ENCODE measurements at regions of chr12 and their contacts with region 1.

Region 1: GRCh38 chr12:95217377-95218149 is at the starts of genes FGD6 and VEZT:
- DNase-seq: peak; percentile 100
- H3K4me3 ChIP-seq: peak within 1 kb of the TSS; percentile 81 to 99 (median 94)
- H3K27ac ChIP-seq: peak within 1 kb of the TSS; percentile 88
- H3K4me1 ChIP-seq: peaks cover 37% of the 10 kb centered on the region
- H3K27me3 ChIP-seq: no peaks in the 10 kb centered on the region
- CTCF ChIP-seq: peak; percentile 61 to 70
- POLR2A ChIP-seq: peak; percentile 86
- total RNA-seq, gene FGD6: 14.0 and 17.8 TPM in 2 replicates
- total RNA-seq, gene VEZT: 85.2 and 91.3 TPM in 2 replicates

Region 2: GRCh38 chr12:94973221-94973620 is 244.3 kb before region 1 on chr12:
- CTCF ChIA-PET with region 1: no interaction called
- POLR2A ChIA-PET with region 1: no interaction called
- dilution Hi-C with region 1: no loop called
- intact Hi-C with region 1: no loop called
- DNase-seq: no peak
- H3K4me3 ChIP-seq: no peak overlapping the region
- H3K27ac ChIP-seq: no peak overlapping the region
- H3K4me1 ChIP-seq: no peaks in the 10 kb centered on the region
- H3K27me3 ChIP-seq: no peaks in the 10 kb centered on the region
- CTCF ChIP-seq: no peak
- POLR2A ChIP-seq: no peak

Region 3: GRCh38 chr12:95003213-95003920 is 214.2 kb before region 1 on chr12 and contains the start of gene NDUFA12:
- CTCF ChIA-PET with region 1: no interaction called
- POLR2A ChIA-PET with region 1: no interaction called
- dilution Hi-C with region 1: no loop called
- intact Hi-C with region 1: loop called (anchors 1 kb)
- DNase-seq: peak; percentile 97
- H3K4me3 ChIP-seq: peak within 1 kb of the TSS; percentile 66 to 89 (median 71)
- H3K27ac ChIP-seq: peak within 1 kb of the TSS; percentile 80
- H3K4me1 ChIP-seq: peaks cover 6% of the 10 kb centered on the region
- H3K27me3 ChIP-seq: no peaks in the 10 kb centered on the region
- CTCF ChIP-seq: no peak
- POLR2A ChIP-seq: peak; percentile 90
- total RNA-seq, gene NDUFA12: 126 and 140 TPM in 2 replicates

Region 4: DNA sequence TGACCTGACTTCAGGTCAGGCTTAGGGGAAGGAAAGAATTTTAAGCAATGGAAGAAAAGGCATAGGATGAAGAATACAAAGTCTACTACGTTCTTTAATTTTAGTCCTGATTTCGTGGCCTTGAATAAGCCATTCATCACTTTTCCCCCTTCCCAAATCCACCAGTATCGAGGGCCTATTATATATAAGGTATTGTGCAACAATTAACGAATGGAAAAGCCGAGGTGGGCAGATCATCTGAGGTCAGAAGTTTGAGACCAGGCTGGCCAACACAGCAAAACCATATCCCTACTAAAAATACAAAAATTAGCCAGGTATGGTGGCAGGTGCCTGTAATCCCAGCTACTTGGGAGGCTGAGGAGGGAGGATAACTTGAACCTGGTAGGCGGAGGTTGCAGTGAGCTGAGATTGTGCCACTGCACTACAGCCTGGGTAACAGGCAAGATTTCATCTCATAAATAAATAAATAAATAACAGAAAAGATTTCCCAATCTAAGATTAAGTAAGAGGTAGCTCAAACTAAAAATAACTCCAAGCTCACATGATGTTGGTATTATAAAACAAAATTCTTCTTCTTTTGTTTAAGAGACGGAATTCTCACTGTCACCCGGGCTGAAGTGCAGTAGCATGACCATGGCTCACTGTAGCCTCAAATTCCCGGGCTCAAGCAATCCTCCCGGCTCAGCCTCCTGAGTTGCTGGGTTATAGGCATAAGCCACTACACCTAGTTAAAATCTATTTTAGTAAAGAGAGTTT is 85.8 kb before region 1 on chr12:
- CTCF ChIA-PET with region 1: interaction called, 14 read pairs
- POLR2A ChIA-PET with region 1: interaction called, 7 read pairs
- dilution Hi-C with region 1: no loop called
- intact Hi-C with region 1: no loop called
- DNase-seq: no peak
- H3K4me3 ChIP-seq: no peak overlapping the region
- H3K27ac ChIP-seq: no peak overlapping the region
- H3K4me1 ChIP-seq: peaks cover 9% of the 10 kb centered on the region
- H3K27me3 ChIP-seq: no peaks in the 10 kb centered on the region
- CTCF ChIP-seq: no peak
- POLR2A ChIP-seq: no peak

Region 5: GRCh38 chr12:95204141-95204866 is 13.3 kb before region 1 on chr12:
- CTCF ChIA-PET with region 1: interaction called, 29 read pairs
- POLR2A ChIA-PET with region 1: interaction called, 3 read pairs
- dilution Hi-C with region 1: no loop called
- intact Hi-C with region 1: loop called (anchors 1 kb)
- DNase-seq: peak; percentile 85
- H3K4me3 ChIP-seq: no peak overlapping the region
- H3K27ac ChIP-seq: peak overlapping the region; percentile 81
- H3K4me1 ChIP-seq: peaks cover 56% of the 10 kb centered on the region
- H3K27me3 ChIP-seq: no peaks in the 10 kb centered on the region
- CTCF ChIP-seq: no peak
- POLR2A ChIP-seq: no peak

Region 6: DNA sequence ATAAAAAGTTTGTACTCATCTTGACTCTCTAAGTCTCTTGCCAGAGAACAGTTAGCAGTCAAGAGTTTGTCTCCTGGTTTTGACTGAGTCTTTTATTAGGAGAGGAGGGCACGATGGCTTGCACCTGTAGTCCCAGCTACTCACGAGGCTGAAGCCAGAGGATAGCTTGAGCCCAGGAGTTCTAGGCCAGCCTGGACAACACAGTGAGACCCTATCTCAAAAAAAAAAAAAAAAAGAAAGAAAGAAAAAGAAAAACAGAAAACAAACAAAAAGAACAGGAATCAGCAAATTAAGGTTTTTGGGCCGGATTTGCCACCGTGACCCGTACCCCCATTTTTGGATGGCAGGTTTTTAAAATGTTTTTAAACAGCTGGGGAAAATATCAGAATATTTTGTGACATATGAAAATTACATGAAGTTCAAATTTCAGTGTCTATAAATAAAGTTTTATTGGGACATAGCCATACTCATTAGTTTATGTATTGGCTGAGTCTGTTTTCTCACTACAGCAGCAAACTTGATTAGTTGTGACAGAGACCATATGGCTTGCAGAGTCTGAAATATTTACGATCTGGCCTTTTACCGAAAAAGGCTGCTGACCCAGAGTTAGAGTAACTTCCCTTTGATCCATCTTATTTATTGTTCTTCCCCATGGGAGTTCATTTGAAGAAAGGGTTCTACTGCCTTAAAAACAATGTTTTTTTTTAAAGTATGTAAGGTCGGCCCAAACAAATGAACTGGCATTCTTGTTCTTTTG is 31.2 kb after region 1 on chr12:
- CTCF ChIA-PET with region 1: no interaction called
- POLR2A ChIA-PET with region 1: no interaction called
- dilution Hi-C with region 1: no loop called
- intact Hi-C with region 1: no loop called
- DNase-seq: peak; percentile 18
- H3K4me3 ChIP-seq: no peak overlapping the region
- H3K27ac ChIP-seq: no peak overlapping the region
- H3K4me1 ChIP-seq: peaks cover 3% of the 10 kb centered on the region
- H3K27me3 ChIP-seq: no peaks in the 10 kb centered on the region
- CTCF ChIP-seq: no peak
- POLR2A ChIP-seq: no peak

Region 7: GRCh38 chr12:95318071-95318545 is 100.5 kb after region 1 on chr12:
- CTCF ChIA-PET with region 1: no interaction called
- POLR2A ChIA-PET with region 1: no interaction called
- dilution Hi-C with region 1: no loop called
- intact Hi-C with region 1: loop called (anchors 5 kb)
- DNase-seq: no peak
- H3K4me3 ChIP-seq: no peak overlapping the region
- H3K27ac ChIP-seq: no peak overlapping the region
- H3K4me1 ChIP-seq: peaks cover 15% of the 10 kb centered on the region
- H3K27me3 ChIP-seq: no peaks in the 10 kb centered on the region
- CTCF ChIP-seq: no peak
- POLR2A ChIP-seq: no peak

Region 8: DNA sequence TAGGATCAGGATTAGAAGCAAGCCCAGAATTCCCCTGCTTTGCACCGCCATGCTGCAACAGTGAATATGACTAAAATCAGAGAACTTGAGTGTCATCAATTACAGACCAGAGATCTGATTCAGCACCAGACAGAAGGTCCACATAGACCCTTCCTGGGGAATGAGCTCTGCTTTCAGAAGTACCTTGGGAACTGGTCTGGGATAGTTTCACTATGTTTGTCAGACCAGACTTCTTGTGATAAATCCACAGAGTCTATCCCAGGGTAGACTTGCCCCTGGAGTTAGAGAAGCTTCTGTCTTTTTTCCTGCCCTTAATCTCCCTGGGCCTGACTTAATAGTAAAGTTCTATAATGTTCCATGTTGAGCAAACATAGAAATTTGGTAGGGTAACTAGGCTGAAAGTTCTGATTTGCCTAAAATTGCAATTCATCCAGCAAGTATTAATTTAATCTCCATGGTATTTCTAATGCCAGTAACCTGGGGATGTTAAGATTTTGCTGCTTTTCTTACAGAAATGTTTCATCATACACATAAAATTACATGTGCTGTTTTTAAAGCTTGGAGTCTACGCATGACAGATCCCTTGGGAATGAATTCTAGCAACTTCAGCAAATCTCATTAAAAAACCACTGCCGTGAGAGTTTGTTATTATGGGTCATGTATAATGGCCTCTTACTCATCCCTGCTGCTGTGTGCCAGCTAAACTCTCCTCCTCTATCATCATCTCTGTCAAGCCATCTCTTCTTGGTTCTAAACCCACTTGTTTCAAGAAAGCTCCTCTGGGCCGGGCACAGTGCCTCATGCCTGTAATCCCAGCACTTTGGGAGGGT is 195.1 kb after region 1 on chr12:
- CTCF ChIA-PET with region 1: no interaction called
- POLR2A ChIA-PET with region 1: no interaction called
- dilution Hi-C with region 1: no loop called
- intact Hi-C with region 1: no loop called
- DNase-seq: no peak
- H3K4me3 ChIP-seq: no peak overlapping the region
- H3K27ac ChIP-seq: no peak overlapping the region
- H3K4me1 ChIP-seq: no peaks in the 10 kb centered on the region
- H3K27me3 ChIP-seq: peaks cover 0 to 2% of the 10 kb centered on the region in 2 experiments
- CTCF ChIP-seq: no peak
- POLR2A ChIP-seq: no peak

Measured in endothelial cell of umbilical vein (primary cell).